ENCODE measurements at regions of chr14 and their contacts with region 1.

Region 1: DNA sequence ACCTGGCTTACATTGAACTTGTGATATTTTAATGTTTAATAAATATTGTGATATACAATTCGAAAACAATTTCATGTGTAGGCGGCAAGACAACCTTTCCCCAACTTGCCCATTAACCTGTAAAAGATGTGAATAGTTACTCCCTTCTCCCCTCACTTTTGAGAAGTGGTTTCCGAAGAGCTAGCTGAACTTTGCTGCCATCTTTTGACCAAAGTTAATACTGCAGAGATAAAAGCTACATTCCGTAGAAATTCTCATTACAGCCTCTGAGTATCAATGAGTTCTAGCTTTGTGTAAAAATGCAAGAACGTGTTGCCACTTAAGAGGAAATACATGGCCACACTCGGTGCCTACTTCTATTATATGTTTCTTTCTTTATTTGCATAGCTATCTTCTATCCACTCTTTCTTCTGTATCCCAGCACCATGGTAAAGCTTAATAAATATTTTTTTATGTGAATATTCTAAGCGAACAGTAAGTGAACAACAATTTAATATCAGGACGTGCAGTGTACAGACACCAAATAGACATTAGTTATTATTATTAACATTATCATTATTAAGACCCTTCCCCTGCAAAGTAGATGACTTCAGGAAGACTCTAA is 105.1 kb upstream of the TMEM260 start:
- DNase-seq: no peak
- ATAC-seq: peak in 1 of 4 donors; percentile 62
- H3K4me3 ChIP-seq: no peak overlapping the region
- H3K27ac ChIP-seq: no peak overlapping the region
- H3K4me1 ChIP-seq: no peaks in the 10 kb centered on the region
- H3K27me3 ChIP-seq: peaks cover 0 to 2% (median 0%) of the 10 kb centered on the region in 3 donors
- CTCF ChIP-seq: peak; percentile 83

Region 2: GRCh38 chr14:55446218-55446654 is 1028.3 kb before region 1 on chr14:
- intact Hi-C with region 1: loop called (anchors 5 to 10 kb)
- DNase-seq: no peak
- ATAC-seq: peak; percentile 44 to 78 (median 56)
- H3K4me3 ChIP-seq: no peak overlapping the region
- H3K27ac ChIP-seq: no peak overlapping the region
- H3K4me1 ChIP-seq: no peaks in the 10 kb centered on the region
- H3K27me3 ChIP-seq: no peaks in the 10 kb centered on the region
- CTCF ChIP-seq: peak; percentile 63

Region 3: DNA sequence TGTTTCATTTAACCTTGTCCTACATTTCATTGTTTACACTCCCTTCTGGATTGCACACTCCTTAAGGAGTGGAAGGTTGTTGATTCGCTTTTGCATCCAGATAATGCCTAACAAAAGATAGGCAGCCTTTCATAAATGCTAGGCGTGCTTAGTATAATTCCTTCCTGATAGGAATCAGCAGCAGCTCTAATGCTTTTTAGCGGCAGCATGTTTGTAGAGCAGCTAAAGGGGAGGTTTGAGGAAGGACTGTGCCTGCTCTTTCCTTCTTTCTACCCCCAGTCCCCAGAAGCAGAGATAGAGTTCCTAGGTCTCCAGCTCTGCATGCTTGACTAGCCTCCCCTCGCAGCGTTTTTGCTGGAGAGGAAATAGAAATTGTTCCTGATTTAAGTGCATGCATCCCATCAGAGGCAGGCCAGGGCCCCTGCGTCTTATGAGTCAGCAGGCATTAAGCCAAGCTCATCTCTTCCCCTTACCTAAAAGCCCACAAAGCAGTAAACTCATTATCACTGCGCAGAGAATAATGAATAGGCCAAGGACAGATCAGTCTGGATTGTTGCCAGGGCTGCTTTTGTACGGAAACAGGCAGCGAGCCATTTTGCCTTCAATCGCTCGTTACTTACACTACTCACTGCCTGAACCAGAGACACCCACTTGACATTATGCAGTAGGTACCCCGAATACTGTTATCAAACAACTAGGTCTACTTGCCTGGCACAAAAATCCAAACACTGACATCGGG is 1020.1 kb before region 1 on chr14:
- intact Hi-C with region 1: loop called (anchors 5 to 10 kb)
- DNase-seq: no peak
- ATAC-seq: no peak
- H3K4me3 ChIP-seq: no peak overlapping the region
- H3K27ac ChIP-seq: no peak overlapping the region
- H3K4me1 ChIP-seq: no peaks in the 10 kb centered on the region
- H3K27me3 ChIP-seq: no peaks in the 10 kb centered on the region
- CTCF ChIP-seq: no peak

Measured in psoas muscle (tissue), 8 donors.